ENCODE measurements at regions of chr13 and their contacts with region 1.

Region 1: GRCh38 chr13:40682449-40683240 is 16.2 kb upstream of the FOXO1 start:
- DNase-seq: no peak
- H3K4me3 ChIP-seq: no peak overlapping the region
- H3K27ac ChIP-seq: no peak overlapping the region
- H3K4me1 ChIP-seq: no peaks in the 10 kb centered on the region
- H3K27me3 ChIP-seq: no peaks in the 10 kb centered on the region
- CTCF ChIP-seq: peak; percentile 19 to 80 (median 62)
- POLR2A ChIP-seq: no peak

Region 2: GRCh38 chr13:39684531-39685137 is 998.0 kb before region 1 on chr13:
- intact Hi-C with region 1: loop called (anchors 2 kb)
- DNase-seq: no peak
- H3K4me3 ChIP-seq: no peak overlapping the region
- H3K27ac ChIP-seq: no peak overlapping the region
- H3K4me1 ChIP-seq: no peaks in the 10 kb centered on the region
- H3K27me3 ChIP-seq: no peaks in the 10 kb centered on the region
- CTCF ChIP-seq: peak in 3 of 4 experiments; percentile 38 to 41 (median 39)
- POLR2A ChIP-seq: no peak

Region 3: GRCh38 chr13:39942552-39943273 is 739.9 kb before region 1 on chr13:
- intact Hi-C with region 1: loop called (anchors 5 kb)
- DNase-seq: peak; percentile 59
- H3K4me3 ChIP-seq: no peak overlapping the region
- H3K27ac ChIP-seq: no peak overlapping the region
- H3K4me1 ChIP-seq: no peaks in the 10 kb centered on the region
- H3K27me3 ChIP-seq: no peaks in the 10 kb centered on the region
- CTCF ChIP-seq: peak; percentile 55 to 85 (median 74)
- POLR2A ChIP-seq: no peak

Region 4: GRCh38 chr13:40069173-40070044 is 613.2 kb before region 1 on chr13:
- intact Hi-C with region 1: loop called (anchors 5 kb)
- DNase-seq: peak; percentile 66
- H3K4me3 ChIP-seq: no peak overlapping the region
- H3K27ac ChIP-seq: no peak overlapping the region
- H3K4me1 ChIP-seq: no peaks in the 10 kb centered on the region
- H3K27me3 ChIP-seq: no peaks in the 10 kb centered on the region
- CTCF ChIP-seq: peak; percentile 64 to 89 (median 82)
- POLR2A ChIP-seq: no peak

Region 5: DNA sequence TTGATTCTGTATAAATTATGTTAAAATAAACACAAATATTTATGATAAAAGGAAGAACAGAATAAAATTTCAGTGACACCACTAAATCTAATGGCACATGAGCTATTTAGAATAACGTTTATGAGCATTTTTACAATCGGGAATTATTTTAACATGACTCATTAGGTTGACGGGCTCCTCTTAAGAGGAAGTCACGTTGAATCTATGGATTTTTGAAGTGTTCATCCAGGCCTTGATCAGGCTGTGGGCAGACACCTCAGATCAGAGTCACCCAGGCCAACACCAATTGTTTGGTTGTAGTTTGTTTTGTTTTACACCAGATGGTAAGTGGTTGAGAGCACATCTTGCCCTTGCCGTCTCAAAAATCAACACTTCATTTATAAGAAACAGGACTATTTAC is 274.0 kb before region 1 on chr13:
- intact Hi-C with region 1: no loop called
- DNase-seq: no peak
- H3K4me3 ChIP-seq: no peak overlapping the region
- H3K27ac ChIP-seq: no peak overlapping the region
- H3K4me1 ChIP-seq: no peaks in the 10 kb centered on the region
- H3K27me3 ChIP-seq: no peaks in the 10 kb centered on the region
- CTCF ChIP-seq: no peak
- POLR2A ChIP-seq: no peak

Region 6: DNA sequence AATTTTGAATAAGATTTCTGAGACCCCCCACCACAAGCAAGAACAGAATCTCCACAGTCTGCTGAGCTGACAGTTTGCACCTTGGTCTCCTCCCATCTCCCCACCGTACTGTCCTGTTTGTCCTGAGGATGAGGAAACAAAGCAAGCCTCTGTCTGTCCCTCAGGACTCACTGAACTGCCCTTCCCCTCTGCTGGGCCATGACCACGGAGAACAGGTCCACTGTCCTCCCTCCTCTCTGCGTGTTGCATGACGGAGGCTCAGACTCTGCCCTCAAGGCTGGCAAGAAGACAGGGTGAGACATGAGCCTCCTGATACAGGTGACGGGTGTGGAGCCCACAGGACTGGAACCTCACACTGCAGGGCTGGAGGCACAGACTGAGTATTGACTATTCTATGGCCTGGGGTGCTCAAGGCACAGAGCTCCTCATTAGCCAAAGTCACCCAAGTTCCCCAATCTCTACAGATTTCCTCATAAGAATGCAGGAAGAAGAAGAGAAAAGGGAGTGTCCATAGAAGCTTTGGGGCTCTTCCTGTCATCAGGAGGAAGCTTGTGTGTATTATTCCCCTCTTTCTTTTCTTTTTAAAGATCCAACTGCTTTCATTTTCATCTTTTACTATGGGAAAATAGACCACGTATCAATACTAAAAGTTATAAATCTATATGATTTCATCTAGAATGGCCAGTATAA is 752.3 kb after region 1 on chr13:
- intact Hi-C with region 1: no loop called
- DNase-seq: no peak
- H3K4me3 ChIP-seq: no peak overlapping the region
- H3K27ac ChIP-seq: no peak overlapping the region
- H3K4me1 ChIP-seq: no peaks in the 10 kb centered on the region
- H3K27me3 ChIP-seq: no peaks in the 10 kb centered on the region
- CTCF ChIP-seq: no peak
- POLR2A ChIP-seq: no peak

Measured in prostate gland (tissue), 2 donors.